Aorta (tissue), 5 donors: ENCODE measurements at regions of chr2 and their contacts with region 1.

Region 1: GRCh38 chr2:38734299-38735058 is 16.7 kb downstream of the SRSF7 start:
- DNase-seq: no peak
- ATAC-seq: no peak
- H3K4me3 ChIP-seq: no peak overlapping the region
- H3K27ac ChIP-seq: no peak overlapping the region
- H3K4me1 ChIP-seq: no peaks in the 10 kb centered on the region
- H3K27me3 ChIP-seq: no peaks in the 10 kb centered on the region

Region 2: DNA sequence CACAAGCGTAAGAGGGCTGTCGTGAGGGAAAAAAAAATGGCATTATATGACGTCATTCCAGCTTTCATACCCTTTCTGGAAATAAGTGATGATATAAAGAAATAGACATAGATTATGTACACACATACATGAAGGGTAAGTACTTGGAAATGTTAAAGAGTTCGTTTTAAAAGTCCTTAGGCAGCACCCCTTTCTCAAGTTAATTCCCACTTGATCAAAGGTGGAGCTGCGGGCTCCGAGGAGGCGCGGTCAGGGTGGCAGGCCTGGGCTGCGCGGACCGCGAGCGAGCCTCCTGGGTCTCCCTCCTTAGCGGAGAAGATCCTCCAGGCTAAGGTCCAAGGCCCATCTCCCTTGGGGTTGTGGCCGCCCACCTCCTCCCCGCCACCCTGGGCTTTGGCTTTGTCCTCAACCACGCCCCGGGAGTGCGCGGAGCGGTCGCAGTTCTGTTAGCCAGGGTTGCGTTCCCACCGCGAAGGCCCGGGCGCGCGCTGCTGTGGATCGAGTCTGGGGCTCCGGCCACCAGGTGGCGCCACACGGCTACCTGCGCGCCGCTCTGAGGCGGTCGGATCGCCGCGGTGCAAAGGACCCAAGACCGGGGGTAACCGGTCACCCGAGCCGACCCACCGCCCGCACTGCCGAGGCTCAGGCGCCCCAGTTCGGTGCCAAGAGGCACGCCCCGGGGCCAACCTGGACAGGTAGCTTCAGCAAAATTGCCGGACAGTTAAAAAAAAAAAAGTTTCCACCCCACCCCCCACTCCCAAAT is 198.6 kb before region 1 on chr2:
- intact Hi-C with region 1: loop called in 1 of 2 experiments (anchors 5 kb)
- DNase-seq: peak; percentile 90 to 96
- ATAC-seq: peak; percentile 95
- H3K4me3 ChIP-seq: peak overlapping the region in 1 of 2 donors; percentile 17
- H3K27ac ChIP-seq: no peak overlapping the region
- H3K4me1 ChIP-seq: no peaks in the 10 kb centered on the region
- H3K27me3 ChIP-seq: no peaks in the 10 kb centered on the region